CD8-positive, alpha-beta memory T cell (primary cell): ENCODE measurements at regions of chr9 and their contacts with region 1.

Region 1: GRCh38 chr9:128341435-128341849 is 1.1 kb downstream of the SLC27A4 start:
- DNase-seq: peak; percentile 43 to 78 (median 56)
- H3K4me3 ChIP-seq: peak overlapping the region; percentile 75
- H3K4me3 Mint-ChIP-seq: peak overlapping the region; percentile 81 to 99 (median 92)
- H3K27ac ChIP-seq: no peak overlapping the region
- H3K27ac Mint-ChIP-seq: peak overlapping the region; percentile 51 to 98 (median 93)
- H3K4me1 ChIP-seq: peaks cover 13% of the 10 kb centered on the region
- H3K4me1 Mint-ChIP-seq: peaks cover 6 to 13% (median 12%) of the 10 kb centered on the region in 3 donors
- H3K27me3 ChIP-seq: no peaks in the 10 kb centered on the region
- H3K27me3 Mint-ChIP-seq: no peaks in the 10 kb centered on the region

Region 2: DNA sequence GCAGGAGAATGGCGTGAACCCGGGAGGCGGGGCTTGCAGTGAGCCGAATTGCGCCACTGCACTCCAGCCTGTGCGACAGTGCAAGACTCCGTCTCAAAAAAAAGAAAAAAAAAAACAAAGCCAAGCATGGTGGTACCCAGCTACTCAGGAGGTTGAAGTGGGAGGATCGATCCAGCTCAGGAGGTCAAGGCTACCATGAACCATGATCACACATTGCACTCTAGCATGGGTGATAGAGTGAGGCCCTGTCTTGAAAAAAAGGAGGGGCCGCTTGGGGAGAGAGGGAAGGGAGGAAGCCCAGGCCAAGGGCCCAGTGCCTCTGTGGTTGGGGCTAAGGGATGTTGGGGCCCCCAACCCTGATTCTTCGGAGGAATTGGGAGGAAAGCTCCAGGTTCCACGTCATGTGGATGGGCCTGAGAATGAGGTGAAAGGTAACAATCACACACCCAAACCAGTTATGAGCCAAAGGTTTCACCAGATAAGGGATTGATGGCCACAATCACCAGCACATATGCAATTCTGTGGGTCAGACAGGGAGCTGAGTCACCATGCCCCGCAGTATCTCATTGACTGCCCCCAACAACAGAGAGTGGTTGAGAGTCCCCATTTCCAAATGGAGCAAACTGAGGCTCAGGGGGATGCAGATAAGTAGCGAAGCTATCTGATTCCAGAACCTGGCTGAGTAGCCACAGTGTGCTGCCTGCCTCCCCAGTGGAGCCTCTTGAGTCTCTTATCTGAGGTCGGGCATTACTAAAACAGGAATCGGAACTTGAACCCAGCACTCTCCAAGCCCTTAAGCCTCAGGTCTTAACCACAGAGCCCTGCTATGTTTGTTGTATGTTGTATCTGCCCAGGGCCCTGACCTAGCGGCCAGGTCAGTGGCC is 44.9 kb before region 1 on chr9:
- CTCF ChIA-PET with region 1: interaction called, 15 read pairs
- POLR2A ChIA-PET with region 1: no interaction called
- DNase-seq: no peak
- H3K4me3 ChIP-seq: no peak overlapping the region
- H3K4me3 Mint-ChIP-seq: no peak overlapping the region
- H3K27ac ChIP-seq: peak overlapping the region; percentile 51
- H3K27ac Mint-ChIP-seq: peak overlapping the region in 2 of 8 donors; percentile 19 to 26
- H3K4me1 ChIP-seq: peaks cover 4% of the 10 kb centered on the region
- H3K4me1 Mint-ChIP-seq: peaks cover 2 to 4% (median 2%) of the 10 kb centered on the region in 3 donors
- H3K27me3 ChIP-seq: no peaks in the 10 kb centered on the region
- H3K27me3 Mint-ChIP-seq: no peaks in the 10 kb centered on the region

Region 3: DNA sequence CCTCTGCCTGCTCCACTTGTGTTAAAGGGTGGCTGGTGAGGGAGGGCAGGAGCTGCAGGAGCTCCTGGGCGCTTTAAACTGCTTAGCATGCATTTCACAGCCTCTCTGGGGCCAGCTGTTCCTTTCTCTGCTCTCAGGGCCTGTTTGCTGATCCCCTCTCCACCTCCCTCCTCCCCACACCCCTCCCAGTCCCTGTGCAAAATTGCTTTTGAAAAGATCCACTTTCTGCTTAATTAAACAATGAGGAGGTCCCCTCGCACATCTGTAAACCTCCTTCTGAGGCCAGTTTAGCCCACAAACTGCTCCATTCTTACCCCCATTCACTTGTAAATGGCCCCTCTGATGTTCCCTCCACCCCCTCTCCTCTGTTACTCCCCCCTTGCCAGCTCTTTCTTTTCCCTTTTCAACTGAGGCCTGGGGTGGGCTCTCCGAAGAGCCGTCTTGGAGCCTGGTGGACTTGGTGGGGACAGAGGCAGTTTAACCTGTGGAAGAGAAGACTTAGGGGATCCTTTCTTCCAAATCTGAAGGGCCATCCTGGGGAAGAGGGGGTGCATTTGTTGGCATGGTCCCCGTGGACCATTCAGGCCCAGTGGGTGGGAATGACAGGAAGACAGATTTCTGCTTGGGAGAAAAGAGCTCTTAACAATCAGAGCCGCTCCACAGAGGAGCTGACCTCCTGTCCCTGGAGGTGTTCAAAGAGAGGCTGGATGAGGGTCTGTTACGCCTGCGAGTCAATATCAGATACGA is 41.7 kb after region 1 on chr9:
- CTCF ChIA-PET with region 1: no interaction called
- POLR2A ChIA-PET with region 1: no interaction called
- DNase-seq: no peak
- H3K4me3 ChIP-seq: no peak overlapping the region
- H3K4me3 Mint-ChIP-seq: no peak overlapping the region
- H3K27ac ChIP-seq: no peak overlapping the region
- H3K27ac Mint-ChIP-seq: peak overlapping the region in 1 of 8 donors; percentile 3
- H3K4me1 ChIP-seq: no peaks in the 10 kb centered on the region
- H3K4me1 Mint-ChIP-seq: peaks cover 0 to 10% (median 5%) of the 10 kb centered on the region in 3 donors
- H3K27me3 ChIP-seq: no peaks in the 10 kb centered on the region
- H3K27me3 Mint-ChIP-seq: no peaks in the 10 kb centered on the region